WTC11 (cell line): ENCODE measurements at regions of chr2 and their contacts with region 1.

Region 1: GRCh38 chr2:121128754-121129659 is 156.0 kb downstream of the TFCP2L1 start:
- DNase-seq: peak; percentile 74
- ATAC-seq: peak; percentile 64
- H3K4me3 Mint-ChIP-seq: no peak overlapping the region
- H3K27ac Mint-ChIP-seq: no peak overlapping the region
- H3K4me1 Mint-ChIP-seq: peaks cover 23% of the 10 kb centered on the region
- H3K27me3 Mint-ChIP-seq: peaks cover 8% of the 10 kb centered on the region
- CTCF ChIP-seq: peak; percentile 35; the same call in 1 of the 2 replicates

Region 2: GRCh38 chr2:121088251-121089165 is 40.5 kb before region 1 on chr2:
- CTCF ChIA-PET with region 1: interaction called, 32 read pairs
- POLR2A ChIA-PET with region 1: no interaction called
- DNase-seq: no peak
- ATAC-seq: no peak
- H3K4me3 Mint-ChIP-seq: no peak overlapping the region
- H3K27ac Mint-ChIP-seq: no peak overlapping the region
- H3K4me1 Mint-ChIP-seq: no peaks in the 10 kb centered on the region
- H3K27me3 Mint-ChIP-seq: peaks cover 13% of the 10 kb centered on the region
- CTCF ChIP-seq: no peak

Region 3: DNA sequence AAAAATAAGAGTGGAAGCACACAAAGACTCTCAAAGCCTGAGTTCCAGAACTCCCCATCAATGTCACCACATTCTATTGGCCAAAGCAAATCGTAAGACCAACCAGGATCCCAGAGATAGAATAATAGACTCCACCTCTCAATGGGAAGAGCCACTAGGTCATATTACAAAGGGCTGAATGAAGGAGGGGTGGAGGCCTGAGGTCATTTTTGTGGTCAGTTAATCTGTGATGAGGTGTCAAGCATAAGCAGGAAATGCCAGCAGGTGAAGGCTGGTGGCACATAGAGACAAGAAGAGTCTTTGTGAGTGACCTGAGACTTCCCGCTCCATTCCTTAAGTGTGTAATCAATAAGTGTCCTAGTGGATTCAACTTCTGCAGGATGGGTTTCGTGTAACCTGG is 11.7 kb after region 1 on chr2:
- CTCF ChIA-PET with region 1: interaction called, 11 read pairs
- POLR2A ChIA-PET with region 1: no interaction called
- DNase-seq: no peak
- ATAC-seq: no peak
- H3K4me3 Mint-ChIP-seq: no peak overlapping the region
- H3K27ac Mint-ChIP-seq: no peak overlapping the region
- H3K4me1 Mint-ChIP-seq: no peaks in the 10 kb centered on the region
- H3K27me3 Mint-ChIP-seq: no peaks in the 10 kb centered on the region; the same call in 1 of the 2 replicates
- CTCF ChIP-seq: no peak

Region 4: DNA sequence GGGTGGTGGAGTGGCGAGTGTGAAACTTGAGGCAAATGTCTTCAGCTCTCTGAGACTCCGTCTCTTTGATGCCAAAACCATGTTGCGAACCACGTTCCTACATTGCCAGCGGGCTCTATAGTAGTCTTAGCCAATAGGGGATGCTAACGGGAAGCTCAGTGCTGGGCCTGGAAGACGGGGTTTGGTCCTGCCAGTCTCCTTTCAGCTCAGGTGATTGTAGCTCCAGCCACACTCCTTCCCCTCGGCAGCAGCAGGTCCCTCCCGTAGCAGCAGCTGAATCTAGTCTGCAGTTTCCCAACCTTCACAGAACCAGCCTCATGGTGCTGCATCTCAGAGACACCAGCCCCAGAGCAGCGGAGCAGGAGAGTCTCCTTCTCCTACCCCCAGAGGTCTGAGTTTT is 46.3 kb after region 1 on chr2:
- CTCF ChIA-PET with region 1: interaction called, 12 read pairs
- POLR2A ChIA-PET with region 1: no interaction called
- DNase-seq: no peak
- ATAC-seq: peak; percentile 79
- H3K4me3 Mint-ChIP-seq: no peak overlapping the region
- H3K27ac Mint-ChIP-seq: no peak overlapping the region
- H3K4me1 Mint-ChIP-seq: no peaks in the 10 kb centered on the region
- H3K27me3 Mint-ChIP-seq: peaks cover 2% of the 10 kb centered on the region
- CTCF ChIP-seq: no peak

Region 5: GRCh38 chr2:121319953-121320352 is 190.9 kb after region 1 on chr2:
- CTCF ChIA-PET with region 1: interaction called, 38 read pairs
- POLR2A ChIA-PET with region 1: interaction called, 3 read pairs
- DNase-seq: no peak
- ATAC-seq: no peak
- H3K4me3 Mint-ChIP-seq: no peak overlapping the region
- H3K27ac Mint-ChIP-seq: no peak overlapping the region
- H3K4me1 Mint-ChIP-seq: no peaks in the 10 kb centered on the region
- H3K27me3 Mint-ChIP-seq: no peaks in the 10 kb centered on the region
- CTCF ChIP-seq: no peak